ENCODE measurements at regions of chr6 and their contacts with region 1.

Region 1: DNA sequence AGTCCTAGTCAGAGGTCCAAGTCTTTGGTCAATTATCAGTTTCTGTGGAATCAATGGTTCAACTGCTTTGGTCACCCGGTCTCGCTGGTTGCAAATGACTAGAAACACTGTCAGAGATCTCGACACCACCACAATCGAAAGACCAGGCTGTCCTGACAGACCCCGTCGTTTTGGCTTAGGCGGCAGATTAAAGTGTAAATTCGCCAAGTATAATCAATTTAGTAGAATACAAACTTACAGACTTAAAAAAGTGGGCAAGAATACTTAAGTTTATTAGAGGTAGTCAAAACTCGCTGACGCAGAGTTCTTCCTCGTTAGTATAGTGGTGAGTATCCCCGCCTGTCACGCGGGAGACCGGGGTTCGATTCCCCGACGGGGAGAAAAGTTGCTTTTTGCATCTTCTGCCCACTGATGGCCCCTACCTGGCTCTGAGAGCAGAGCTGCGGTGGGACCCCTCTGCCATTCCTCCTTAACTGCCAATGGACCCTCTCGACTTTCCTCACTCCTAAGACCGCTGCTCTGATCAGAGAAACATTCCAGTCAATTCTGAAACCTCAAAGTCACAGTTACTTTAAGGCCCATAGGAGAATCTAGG is 30.6 kb upstream of the ZNF184 start:
- DNase-seq: no peak

Region 2: GRCh38 chr6:27188885-27189418 is 314.6 kb before region 1 on chr6:
- intact Hi-C with region 1: loop called (anchors 10 kb)
- DNase-seq: no peak